Activated CD4-positive, alpha-beta memory T cell treated with anti-CD3 and anti-CD28 coated beads for 36 hours (primary cell): ENCODE measurements at regions of chr20 and their contacts with region 1.

Region 1: DNA sequence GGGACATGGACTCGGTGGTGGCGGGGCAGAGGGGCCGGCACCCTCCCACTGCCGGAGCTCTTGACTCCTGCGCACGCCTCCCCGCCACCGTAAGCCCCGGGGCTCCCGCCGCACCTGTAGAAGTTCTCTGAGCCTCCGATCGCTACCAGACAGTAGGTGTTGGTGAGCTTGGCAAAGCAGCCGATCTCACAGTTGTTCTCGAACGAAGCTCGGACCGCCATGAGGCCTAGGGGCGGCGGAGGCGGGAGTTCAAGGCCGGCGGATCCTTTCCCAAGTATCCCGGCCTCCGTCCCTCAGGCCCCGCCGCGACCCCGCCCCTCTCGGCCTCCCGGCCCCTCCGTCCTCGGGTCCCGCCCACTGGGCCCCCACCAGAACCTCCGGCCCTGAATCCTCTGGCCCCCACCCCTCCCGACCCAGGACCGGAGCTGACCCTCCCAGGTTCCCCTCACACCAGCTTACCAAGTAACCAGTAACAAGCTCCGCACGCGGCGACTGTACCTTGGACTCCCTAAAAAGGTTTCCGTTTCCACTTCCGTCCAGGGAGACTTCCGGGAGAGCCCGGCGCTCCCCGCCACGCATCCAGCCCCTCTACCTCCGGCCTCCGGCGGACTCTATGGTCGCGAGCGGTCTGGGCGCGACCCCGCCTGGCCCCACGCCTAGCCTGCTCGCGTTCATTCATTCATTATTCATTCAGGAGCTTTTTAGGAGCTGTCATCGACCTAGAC is at the start of gene EIF6:
- DNase-seq: peak; percentile 88
- H3K4me3 Mint-ChIP-seq: peak within 1 kb of the TSS; percentile 78
- H3K27ac Mint-ChIP-seq: peak within 1 kb of the TSS; percentile 64
- H3K4me1 Mint-ChIP-seq: peaks cover 25% of the 10 kb centered on the region
- H3K27me3 Mint-ChIP-seq: no peaks in the 10 kb centered on the region
- total RNA-seq, gene EIF6: 115 to 120 TPM

Region 2: GRCh38 chr20:35344354-35344837 is 60.0 kb after region 1 on chr20:
- CTCF ChIA-PET with region 1: no interaction called
- POLR2A ChIA-PET with region 1: no interaction called
- intact Hi-C with region 1: loop called (anchors 10 kb)
- DNase-seq: no peak
- H3K4me3 Mint-ChIP-seq: no peak overlapping the region
- H3K27ac Mint-ChIP-seq: no peak overlapping the region
- H3K4me1 Mint-ChIP-seq: peaks cover 4% of the 10 kb centered on the region
- H3K27me3 Mint-ChIP-seq: no peaks in the 10 kb centered on the region